Ascending aorta (tissue), 2 donors: ENCODE measurements at regions of chr11 and their contacts with region 1.

Region 1: DNA sequence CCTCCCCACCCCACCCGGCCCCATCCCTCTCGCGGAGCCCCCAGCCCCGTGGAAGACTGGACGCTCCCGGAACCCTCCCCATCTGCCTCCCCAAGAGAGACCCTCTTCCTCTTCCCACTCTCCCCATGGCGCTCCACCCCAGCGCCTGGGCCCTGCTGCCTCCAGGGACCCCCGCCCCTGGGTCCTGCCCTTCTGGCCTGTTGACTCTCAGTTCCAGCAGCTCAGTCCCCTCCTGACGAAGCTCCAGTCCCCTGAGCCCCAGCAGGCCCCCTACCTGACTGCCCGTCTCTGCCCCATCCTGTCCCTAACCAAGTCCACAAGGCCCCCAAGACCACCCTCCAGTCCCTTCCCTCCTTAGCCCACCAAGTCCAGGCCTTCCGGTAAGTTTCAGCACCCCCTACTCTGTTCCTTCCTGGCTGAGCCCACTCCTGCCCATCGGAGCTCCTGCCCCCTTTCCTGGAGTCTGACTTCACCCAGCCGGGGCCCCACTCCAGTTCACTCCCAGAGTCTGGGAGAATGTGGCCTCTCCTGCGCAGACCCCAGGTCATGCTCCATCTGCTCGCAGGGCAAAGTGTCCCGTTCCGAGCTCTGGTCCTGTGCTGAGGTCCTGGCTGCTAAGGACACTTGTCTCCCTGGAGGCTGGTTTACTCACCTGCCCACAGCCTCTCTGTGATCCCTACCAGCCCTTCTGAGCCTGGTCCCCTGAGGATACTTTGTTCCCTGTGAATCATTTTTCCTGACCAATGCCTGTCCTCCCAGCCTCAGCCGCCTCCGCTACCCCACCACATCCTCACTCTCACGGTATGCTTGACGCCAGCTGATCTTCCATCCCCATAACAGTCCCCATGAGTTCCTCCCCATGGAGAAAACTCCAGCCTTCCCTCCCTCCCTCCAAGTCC is 732 bp downstream of the IFITM10 start:
- DNase-seq: peak; percentile 65 to 90
- H3K4me3 ChIP-seq: peak overlapping the region; percentile 68 to 80
- H3K27ac ChIP-seq: peak overlapping the region; percentile 96 to 97
- H3K4me1 ChIP-seq: peaks cover 18 to 34% of the 10 kb centered on the region in 2 donors
- H3K27me3 ChIP-seq: no peaks in the 10 kb centered on the region
- CTCF ChIP-seq: no peak

Region 2: GRCh38 chr11:1487851-1488547 is 261.7 kb before region 1 on chr11:
- intact Hi-C with region 1: no loop called
- DNase-seq: peak in 1 of 2 donors; percentile 7
- H3K4me3 ChIP-seq: peak overlapping the region in 1 of 2 donors; percentile 62
- H3K27ac ChIP-seq: peak overlapping the region; percentile 87 to 98
- H3K4me1 ChIP-seq: peaks cover 29 to 54% of the 10 kb centered on the region in 2 donors
- H3K27me3 ChIP-seq: no peaks in the 10 kb centered on the region
- CTCF ChIP-seq: peak in 1 of 3 experiments; percentile 13

Region 3: DNA sequence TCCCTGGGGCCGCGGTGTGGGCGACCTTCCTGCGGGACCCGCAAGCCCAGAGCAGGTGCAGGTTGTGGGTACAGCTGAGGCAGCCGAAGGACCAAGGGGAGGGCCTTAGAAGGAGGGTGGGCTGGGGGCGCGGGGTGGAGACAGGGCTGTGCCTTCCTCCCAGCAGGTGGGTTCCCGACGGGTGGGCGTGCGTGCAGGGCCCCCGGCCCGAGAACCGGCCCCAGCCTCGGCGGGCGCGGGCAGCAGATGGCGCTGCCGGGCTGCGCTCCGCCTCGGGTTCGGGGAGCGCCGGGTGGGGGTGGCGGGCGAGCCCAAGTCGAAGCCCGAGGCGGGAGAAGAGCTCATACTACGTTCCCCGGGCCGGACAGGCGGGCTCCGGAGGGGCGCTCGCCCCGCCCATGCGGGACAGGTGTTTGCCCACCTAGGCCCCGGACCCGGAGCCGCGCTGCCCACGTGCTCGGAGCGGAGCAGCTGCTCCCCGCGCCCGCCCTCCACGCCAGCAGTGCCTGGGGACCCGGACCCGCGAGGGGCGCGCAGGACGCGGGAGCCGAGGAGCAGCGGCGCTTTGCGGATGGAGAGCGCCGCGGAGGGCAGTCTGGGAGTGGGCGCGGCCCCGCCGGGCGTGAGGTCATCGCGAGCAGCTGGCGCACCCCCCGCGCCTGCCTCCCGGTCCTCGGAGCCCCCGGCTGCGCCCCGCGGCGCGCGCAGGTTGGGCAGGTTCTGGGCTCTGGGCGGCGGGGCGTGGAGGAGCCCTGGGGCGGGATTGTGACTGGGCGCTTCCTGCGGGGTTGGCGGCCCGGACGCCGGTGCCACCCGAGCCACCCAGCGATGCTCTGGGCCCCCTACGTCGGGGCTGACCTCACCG is 202.9 kb before region 1 on chr11:
- intact Hi-C with region 1: loop called (anchors 5 kb)
- DNase-seq: peak in 1 of 2 donors; percentile 77
- H3K4me3 ChIP-seq: peak overlapping the region; percentile 46 to 70
- H3K27ac ChIP-seq: peak overlapping the region; percentile 75 to 87
- H3K4me1 ChIP-seq: peaks cover 8 to 24% of the 10 kb centered on the region in 2 donors
- H3K27me3 ChIP-seq: no peaks in the 10 kb centered on the region
- CTCF ChIP-seq: peak; percentile 75 to 94 (median 86)

Region 4: DNA sequence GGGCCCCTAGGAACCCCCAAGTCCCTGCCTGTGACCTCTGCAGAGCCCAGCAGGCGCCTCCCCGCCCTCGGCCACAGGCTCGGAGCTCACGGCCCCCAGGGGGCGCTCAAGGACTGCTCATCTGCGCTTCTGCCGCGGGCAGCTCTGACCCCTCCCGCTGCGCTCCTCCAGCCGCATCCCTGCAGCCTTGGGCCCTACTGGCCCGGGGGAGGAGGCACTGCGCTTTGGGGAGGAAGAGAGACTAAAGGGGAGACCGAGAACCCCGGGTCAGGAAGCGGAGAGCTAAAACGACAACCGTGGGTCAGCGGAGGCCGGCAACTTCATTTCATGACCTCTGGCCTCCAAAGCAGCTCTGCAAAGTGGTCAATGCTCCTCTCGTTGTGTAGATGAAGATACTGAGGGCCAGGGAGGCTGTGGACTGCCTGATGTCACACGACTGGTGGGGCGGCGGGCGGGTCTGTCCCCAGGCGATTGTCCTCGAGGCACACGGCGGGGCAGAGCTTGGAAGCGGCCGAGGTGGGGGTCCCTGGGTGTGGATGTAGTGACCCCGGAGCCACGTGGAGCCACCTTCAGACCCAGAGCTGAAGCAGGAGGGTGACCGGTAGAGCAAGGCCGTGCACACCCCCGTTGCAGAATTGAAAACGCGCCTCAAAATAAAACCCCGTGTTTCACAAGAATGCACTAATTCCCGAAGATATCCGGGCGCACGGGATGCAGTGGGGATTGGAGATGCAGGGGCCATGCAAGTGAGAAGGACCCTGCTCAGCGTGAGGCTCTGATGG is 55.4 kb before region 1 on chr11:
- intact Hi-C with region 1: loop called (anchors 2 kb)
- DNase-seq: peak in 1 of 2 donors; percentile 90
- H3K4me3 ChIP-seq: peak overlapping the region; percentile 35 to 41
- H3K27ac ChIP-seq: peak overlapping the region in 1 of 2 donors; percentile 72
- H3K4me1 ChIP-seq: peaks cover 4 to 8% of the 10 kb centered on the region in 2 donors
- H3K27me3 ChIP-seq: no peaks in the 10 kb centered on the region
- CTCF ChIP-seq: peak; percentile 86 to 95 (median 95)

Region 5: DNA sequence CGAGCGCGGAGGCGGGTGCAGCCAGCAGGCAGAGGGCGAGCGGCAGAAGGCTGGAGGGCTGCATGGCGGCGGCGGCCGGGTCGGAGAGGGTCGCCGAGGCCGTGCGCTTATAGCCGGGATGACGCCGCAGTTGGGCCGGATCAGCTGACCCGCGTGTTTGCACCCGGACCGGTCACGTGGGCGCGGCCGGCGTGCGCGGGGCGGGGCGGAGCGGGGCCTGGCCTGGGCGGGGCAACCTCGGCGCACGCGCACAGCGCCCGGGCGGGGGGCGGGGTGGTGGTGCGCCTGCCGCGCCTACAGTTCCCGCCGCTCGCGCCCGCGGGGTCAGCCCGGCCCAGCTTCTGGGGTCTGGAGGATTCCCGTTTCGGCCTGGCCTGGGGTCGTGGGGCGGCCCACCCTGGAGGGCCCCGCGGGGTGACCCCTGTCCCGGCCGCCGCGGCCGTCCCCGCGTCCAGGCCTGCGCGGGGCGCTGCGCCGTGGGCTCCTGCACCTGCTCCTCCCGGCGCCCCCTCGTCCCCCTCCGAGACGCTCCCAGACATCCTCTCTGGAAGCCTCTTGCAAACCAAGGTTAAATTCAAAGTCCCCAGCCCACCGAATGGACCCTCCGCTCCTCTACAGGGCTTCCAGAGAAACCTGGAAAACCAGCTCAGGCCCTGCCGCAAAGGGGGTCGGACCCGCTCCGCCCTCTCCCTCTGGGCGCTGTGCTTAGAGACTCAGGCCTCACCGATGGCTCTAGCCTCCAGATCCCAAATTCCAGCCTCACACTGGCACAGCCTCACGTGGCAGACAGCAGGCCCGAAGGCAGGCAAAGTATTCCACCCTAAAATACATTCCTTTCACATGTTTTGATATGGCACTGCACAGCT is 14.4 kb after region 1 on chr11 and contains the start of gene CTSD:
- intact Hi-C with region 1: loop called (anchors 1 kb)
- DNase-seq: peak; percentile 16 to 93
- H3K4me3 ChIP-seq: peak within 1 kb of the TSS; percentile 74 to 96
- H3K27ac ChIP-seq: peak within 1 kb of the TSS; percentile 83 to 94
- H3K4me1 ChIP-seq: peaks cover 24 to 43% of the 10 kb centered on the region in 2 donors
- H3K27me3 ChIP-seq: no peaks in the 10 kb centered on the region
- CTCF ChIP-seq: no peak
- total RNA-seq, gene CTSD: 777 TPM

Region 6: DNA sequence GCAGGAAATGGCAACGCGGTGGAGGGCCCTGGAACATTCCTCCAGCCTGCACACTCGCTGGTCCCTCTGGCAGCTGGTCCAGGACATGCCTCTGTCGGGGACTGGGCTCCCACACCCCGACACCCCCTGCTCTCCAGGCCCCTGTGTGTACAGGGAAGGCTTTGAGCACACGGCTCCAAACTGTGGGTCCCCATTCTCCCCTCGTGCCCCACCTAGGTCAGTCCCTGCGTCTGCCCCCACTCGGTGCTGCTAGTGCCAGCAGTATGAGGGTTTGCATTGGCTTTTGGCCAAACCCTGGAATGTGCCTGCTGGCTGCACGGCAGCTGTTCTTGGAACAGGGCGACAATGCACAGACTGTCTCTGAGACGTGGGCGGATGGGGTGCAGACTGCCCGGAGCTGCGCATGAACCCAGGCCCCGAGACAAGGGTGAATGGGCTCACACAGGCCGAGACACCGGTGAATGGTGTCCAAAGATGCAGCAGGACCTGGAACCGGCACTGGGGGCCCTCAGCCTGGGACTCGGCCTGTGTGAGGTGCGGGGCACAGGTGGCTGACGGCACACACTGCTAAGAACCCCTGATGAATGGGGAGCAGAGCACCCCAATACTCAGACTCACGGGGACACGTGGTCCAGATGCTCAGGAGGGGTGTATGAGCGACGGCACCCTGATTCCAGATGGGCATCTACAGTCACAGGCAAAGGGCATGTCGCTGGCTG is 77.6 kb after region 1 on chr11:
- intact Hi-C with region 1: loop called (anchors 1 kb)
- DNase-seq: peak; percentile 51 to 93
- H3K4me3 ChIP-seq: peak overlapping the region in 1 of 2 donors; percentile 38
- H3K27ac ChIP-seq: peak overlapping the region; percentile 94 to 96
- H3K4me1 ChIP-seq: peaks cover 60 to 76% of the 10 kb centered on the region in 2 donors
- H3K27me3 ChIP-seq: no peaks in the 10 kb centered on the region
- CTCF ChIP-seq: peak in 1 of 3 experiments; percentile 13

Region 7: GRCh38 chr11:1832211-1832919 is 82.7 kb after region 1 on chr11:
- intact Hi-C with region 1: loop called (anchors 1 kb)
- DNase-seq: peak in 1 of 2 donors; percentile 74
- H3K4me3 ChIP-seq: peak overlapping the region; percentile 37 to 53
- H3K27ac ChIP-seq: peak overlapping the region; percentile 94 to 96
- H3K4me1 ChIP-seq: peaks cover 44% of the 10 kb centered on the region in 2 donors
- H3K27me3 ChIP-seq: no peaks in the 10 kb centered on the region
- CTCF ChIP-seq: peak; percentile 98 to 100 (median 98)

Region 8: GRCh38 chr11:1876361-1877063 is 126.8 kb after region 1 on chr11:
- intact Hi-C with region 1: loop called (anchors 5 kb)
- DNase-seq: no peak
- H3K4me3 ChIP-seq: peak overlapping the region in 1 of 2 donors; percentile 20
- H3K27ac ChIP-seq: peak overlapping the region; percentile 87 to 91
- H3K4me1 ChIP-seq: peaks cover 14 to 48% of the 10 kb centered on the region in 2 donors
- H3K27me3 ChIP-seq: no peaks in the 10 kb centered on the region
- CTCF ChIP-seq: peak; percentile 20 to 64 (median 39)